ENCODE measurements at regions of chr21 and their contacts with region 1.

Region 1: GRCh38 chr21:15894596-15894995 is 164.8 kb downstream of the USP25 start:
- DNase-seq: no peak
- ATAC-seq: no peak
- H3K4me3 ChIP-seq: no peak overlapping the region
- H3K27ac ChIP-seq: no peak overlapping the region
- H3K4me1 ChIP-seq: no peaks in the 10 kb centered on the region
- H3K27me3 ChIP-seq: no peaks in the 10 kb centered on the region
- CTCF ChIP-seq: no peak
- EP300 ChIP-seq: no peak
- POLR2A ChIP-seq: no peak
- RAD21 ChIP-seq: no peak

Region 2: GRCh38 chr21:15472108-15473040 is 422.2 kb before region 1 on chr21:
- CTCF ChIA-PET with region 1: no interaction called
- POLR2A ChIA-PET with region 1: no interaction called
- RAD21 ChIA-PET with region 1: no interaction called
- SMC1A ChIA-PET with region 1: no interaction called
- in situ Hi-C with region 1: no loop called
- intact Hi-C with region 1: no loop called
- DNase-seq: no peak
- ATAC-seq: no peak
- H3K4me3 ChIP-seq: no peak overlapping the region
- H3K27ac ChIP-seq: no peak overlapping the region
- H3K4me1 ChIP-seq: no peaks in the 10 kb centered on the region
- H3K27me3 ChIP-seq: no peaks in the 10 kb centered on the region; a peak in 1 of 4 replicates
- CTCF ChIP-seq: no peak
- EP300 ChIP-seq: no peak
- POLR2A ChIP-seq: no peak
- RAD21 ChIP-seq: no peak

Region 3: DNA sequence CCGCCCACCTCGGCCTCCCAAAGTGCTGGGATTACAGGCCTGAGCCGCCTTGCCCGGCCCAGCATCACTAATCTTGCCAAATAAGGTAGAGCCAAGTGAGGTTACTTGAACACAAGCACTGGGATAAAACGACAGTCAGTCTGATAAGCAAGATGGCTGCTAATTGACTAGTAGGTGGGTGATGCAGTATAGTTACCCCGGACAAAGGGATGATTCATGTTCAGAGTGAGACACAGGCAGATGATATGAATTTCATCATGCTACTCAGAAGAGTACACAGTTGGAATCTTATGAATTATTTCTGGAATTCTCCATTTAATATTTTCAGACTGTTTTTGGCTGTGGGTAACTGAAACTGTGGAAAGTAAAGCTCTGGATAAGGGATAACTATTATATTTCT is 13.6 kb after region 1 on chr21:
- CTCF ChIA-PET with region 1: no interaction called
- POLR2A ChIA-PET with region 1: no interaction called
- RAD21 ChIA-PET with region 1: no interaction called
- SMC1A ChIA-PET with region 1: no interaction called
- in situ Hi-C with region 1: no loop called
- intact Hi-C with region 1: no loop called
- DNase-seq: no peak
- ATAC-seq: no peak
- H3K4me3 ChIP-seq: no peak overlapping the region
- H3K27ac ChIP-seq: no peak overlapping the region
- H3K4me1 ChIP-seq: no peaks in the 10 kb centered on the region
- H3K27me3 ChIP-seq: no peaks in the 10 kb centered on the region
- CTCF ChIP-seq: no peak
- EP300 ChIP-seq: no peak
- POLR2A ChIP-seq: no peak
- RAD21 ChIP-seq: no peak

Region 4: GRCh38 chr21:16330082-16330907 is 435.7 kb after region 1 on chr21:
- CTCF ChIA-PET with region 1: no interaction called
- POLR2A ChIA-PET with region 1: no interaction called
- RAD21 ChIA-PET with region 1: no interaction called
- SMC1A ChIA-PET with region 1: no interaction called
- in situ Hi-C with region 1: no loop called
- intact Hi-C with region 1: loop called (anchors 10 kb)
- DNase-seq: no peak
- ATAC-seq: peak; percentile 95
- H3K4me3 ChIP-seq: no peak overlapping the region
- H3K27ac ChIP-seq: no peak overlapping the region
- H3K4me1 ChIP-seq: no peaks in the 10 kb centered on the region
- H3K27me3 ChIP-seq: no peaks in the 10 kb centered on the region
- CTCF ChIP-seq: peak; percentile 54 to 66 (median 58); a peak in 5 of 6 replicates
- EP300 ChIP-seq: no peak
- POLR2A ChIP-seq: no peak
- RAD21 ChIP-seq: peak; percentile 84